Activated T-helper 1 cell treated with anti-CD3 and anti-CD28 coated beads, Interleukin-12 subunit alpha, Interleukin-12 subunit beta, Interleukin-2, Interleukin-4 antibody, amounts not matched to agents 30 ng/mL and 10 ng/mL and 1 ng/mL, durations not matched to agents 14 hours and 24 hours and 36 hours (primary cell): ENCODE measurements at regions of chr2 and their contacts with region 1.

Region 1: DNA sequence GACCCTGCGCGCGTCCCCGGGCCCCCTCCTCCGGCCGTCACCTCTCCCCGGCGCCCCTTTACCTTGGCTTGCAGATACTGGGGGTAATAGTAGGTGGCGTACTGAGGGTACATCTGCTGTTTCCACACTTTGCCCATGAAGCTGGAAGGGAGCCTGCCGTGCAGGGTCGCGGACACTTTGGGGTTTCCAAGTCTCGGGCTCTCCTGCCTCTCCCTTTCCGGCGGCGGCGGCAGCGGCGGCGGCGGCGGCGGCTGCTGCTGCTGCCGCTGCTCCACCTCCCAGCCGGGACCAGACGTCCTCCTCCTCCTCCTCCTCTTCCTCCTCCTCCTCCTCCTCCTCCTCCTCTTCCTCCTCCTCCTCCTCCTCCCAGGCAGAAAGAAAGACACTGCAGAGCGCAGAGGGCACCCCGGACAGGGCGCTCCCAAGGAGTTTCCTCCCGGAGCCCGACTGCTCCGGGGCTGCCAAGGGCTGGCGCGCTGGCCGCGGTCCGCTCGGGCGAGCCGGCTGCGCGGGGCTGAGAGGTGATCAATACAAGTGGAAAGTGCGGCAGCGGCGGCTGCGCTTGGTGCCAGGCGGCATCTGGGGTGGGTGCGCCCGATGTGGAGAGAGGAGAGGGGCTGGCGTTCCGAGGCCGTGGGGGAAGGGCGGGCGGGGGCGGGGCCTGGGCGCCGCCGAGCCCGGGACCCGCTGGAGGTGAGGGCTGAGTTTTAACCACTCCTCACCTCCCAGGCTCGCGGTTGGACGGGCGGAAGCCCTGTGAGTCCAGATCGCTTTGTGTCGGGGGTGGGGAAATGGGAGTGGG is at the start of gene RBMS1:
- DNase-seq: peak; percentile 35
- H3K4me3 Mint-ChIP-seq: peak within 1 kb of the TSS; percentile 97
- H3K27ac Mint-ChIP-seq: peak within 1 kb of the TSS; percentile 97
- H3K4me1 Mint-ChIP-seq: peaks cover 47% of the 10 kb centered on the region
- H3K27me3 Mint-ChIP-seq: peaks cover 9% of the 10 kb centered on the region
- total RNA-seq, gene RBMS1: 35.4 and 36.3 TPM in 2 replicates

Region 2: DNA sequence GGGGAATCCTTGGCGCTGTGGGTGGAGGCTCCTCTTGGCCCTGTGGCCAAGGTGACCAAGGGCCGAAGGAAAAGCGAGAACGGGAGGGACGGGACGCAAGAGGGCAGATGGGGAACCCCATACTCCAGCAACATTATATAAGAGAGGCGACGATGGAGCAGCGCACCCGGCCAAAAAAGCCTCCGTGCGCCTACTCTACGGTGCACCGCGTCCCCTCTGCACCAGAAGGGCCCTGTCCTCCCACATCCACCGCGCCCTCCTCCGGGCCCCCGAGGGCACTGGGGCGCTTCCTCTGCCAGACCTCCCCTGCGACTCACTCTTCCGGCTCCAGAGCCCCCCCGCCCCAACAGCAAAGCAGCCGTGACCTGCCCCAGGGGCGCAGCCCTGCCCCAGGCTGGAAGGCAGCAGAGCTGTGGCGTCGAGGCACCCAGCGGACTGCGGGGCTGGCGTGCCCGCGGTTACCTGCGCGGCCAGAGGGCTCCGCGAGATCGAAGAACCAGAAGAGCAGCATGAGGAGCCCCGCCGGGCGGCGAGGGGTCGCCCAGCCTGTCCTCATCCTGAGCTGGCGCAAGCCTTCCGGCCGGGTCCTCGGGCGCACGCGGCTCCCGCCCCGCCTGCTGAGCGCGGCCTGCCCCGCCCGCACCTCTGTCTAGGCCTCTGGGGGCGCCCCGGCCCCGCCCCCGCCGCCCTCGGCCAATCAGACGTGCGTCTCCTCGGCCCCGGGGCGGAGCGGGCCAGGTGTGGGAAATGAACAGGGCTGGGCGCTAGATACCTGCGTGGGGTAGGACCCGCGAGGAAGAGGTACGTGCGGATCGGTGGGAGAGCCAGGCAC is 589.1 kb before region 1 on chr2:
- intact Hi-C with region 1: loop called (anchors 10 kb)
- DNase-seq: peak; percentile 69
- H3K4me3 Mint-ChIP-seq: peak within 1 kb of the TSS; percentile 92
- H3K27ac Mint-ChIP-seq: peak within 1 kb of the TSS; percentile 91
- H3K4me1 Mint-ChIP-seq: peaks cover 41% of the 10 kb centered on the region
- H3K27me3 Mint-ChIP-seq: no peaks in the 10 kb centered on the region

Region 3: GRCh38 chr2:160406591-160407392 is 86.6 kb before region 1 on chr2:
- intact Hi-C with region 1: loop called (anchors 1 kb)
- DNase-seq: peak; percentile 66
- H3K4me3 Mint-ChIP-seq: peak overlapping the region; percentile 90
- H3K27ac Mint-ChIP-seq: peak overlapping the region; percentile 92
- H3K4me1 Mint-ChIP-seq: peaks cover 83% of the 10 kb centered on the region
- H3K27me3 Mint-ChIP-seq: no peaks in the 10 kb centered on the region

Region 4: DNA sequence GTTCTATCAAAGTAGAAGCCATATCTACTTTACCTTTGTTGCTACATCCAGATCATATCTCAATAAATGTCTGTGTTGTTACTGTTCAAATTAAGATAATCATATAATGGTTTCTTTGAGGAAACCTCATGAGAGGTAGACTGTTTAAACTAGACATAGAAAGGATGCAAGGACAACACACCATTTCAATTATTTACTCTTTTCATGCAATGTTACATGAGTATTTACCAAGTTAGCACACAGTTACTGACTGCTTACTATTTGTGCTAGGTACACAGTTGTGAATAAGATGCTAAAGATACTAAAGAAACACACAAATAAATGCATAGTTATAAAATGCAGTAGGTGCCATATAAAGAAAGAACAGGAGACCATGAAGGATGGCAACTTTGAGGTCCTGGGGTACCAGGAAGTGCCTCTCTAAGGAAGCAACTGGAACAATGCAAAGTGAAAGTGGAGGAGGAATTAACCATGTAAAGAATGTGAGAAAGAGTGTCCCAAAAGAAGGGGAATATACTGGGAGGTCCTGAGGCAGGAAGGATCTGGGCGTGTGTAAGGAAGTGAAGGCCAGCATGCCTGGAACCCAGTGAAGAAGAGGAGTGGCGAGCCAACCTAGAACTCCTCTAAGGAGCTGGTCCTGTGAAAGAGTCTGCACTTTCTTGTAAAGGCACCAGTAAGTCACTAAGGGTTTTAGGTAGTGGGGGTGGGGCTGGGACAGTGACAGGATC is 39.2 kb before region 1 on chr2:
- intact Hi-C with region 1: no loop called
- DNase-seq: no peak
- H3K4me3 Mint-ChIP-seq: no peak overlapping the region
- H3K27ac Mint-ChIP-seq: no peak overlapping the region
- H3K4me1 Mint-ChIP-seq: peaks cover 6% of the 10 kb centered on the region
- H3K27me3 Mint-ChIP-seq: no peaks in the 10 kb centered on the region

Region 5: GRCh38 chr2:160472839-160473251 is 20.6 kb before region 1 on chr2:
- intact Hi-C with region 1: loop called (anchors 1 kb)
- DNase-seq: no peak
- H3K4me3 Mint-ChIP-seq: peak overlapping the region; percentile 49
- H3K27ac Mint-ChIP-seq: peak overlapping the region; percentile 59
- H3K4me1 Mint-ChIP-seq: peaks cover 67% of the 10 kb centered on the region
- H3K27me3 Mint-ChIP-seq: no peaks in the 10 kb centered on the region

Region 6: GRCh38 chr2:160505256-160505655 is 11.8 kb after region 1 on chr2:
- intact Hi-C with region 1: loop called (anchors 1 kb)
- DNase-seq: no peak
- H3K4me3 Mint-ChIP-seq: no peak overlapping the region
- H3K27ac Mint-ChIP-seq: no peak overlapping the region
- H3K4me1 Mint-ChIP-seq: peaks cover 29% of the 10 kb centered on the region
- H3K27me3 Mint-ChIP-seq: peaks cover 3% of the 10 kb centered on the region

Region 7: GRCh38 chr2:160652236-160652635 is 158.8 kb after region 1 on chr2:
- intact Hi-C with region 1: loop called (anchors 5 kb)
- DNase-seq: peak; percentile 48
- H3K4me3 Mint-ChIP-seq: peak overlapping the region; percentile 4
- H3K27ac Mint-ChIP-seq: peak overlapping the region; percentile 27
- H3K4me1 Mint-ChIP-seq: peaks cover 20% of the 10 kb centered on the region
- H3K27me3 Mint-ChIP-seq: peaks cover 4% of the 10 kb centered on the region

Region 8: DNA sequence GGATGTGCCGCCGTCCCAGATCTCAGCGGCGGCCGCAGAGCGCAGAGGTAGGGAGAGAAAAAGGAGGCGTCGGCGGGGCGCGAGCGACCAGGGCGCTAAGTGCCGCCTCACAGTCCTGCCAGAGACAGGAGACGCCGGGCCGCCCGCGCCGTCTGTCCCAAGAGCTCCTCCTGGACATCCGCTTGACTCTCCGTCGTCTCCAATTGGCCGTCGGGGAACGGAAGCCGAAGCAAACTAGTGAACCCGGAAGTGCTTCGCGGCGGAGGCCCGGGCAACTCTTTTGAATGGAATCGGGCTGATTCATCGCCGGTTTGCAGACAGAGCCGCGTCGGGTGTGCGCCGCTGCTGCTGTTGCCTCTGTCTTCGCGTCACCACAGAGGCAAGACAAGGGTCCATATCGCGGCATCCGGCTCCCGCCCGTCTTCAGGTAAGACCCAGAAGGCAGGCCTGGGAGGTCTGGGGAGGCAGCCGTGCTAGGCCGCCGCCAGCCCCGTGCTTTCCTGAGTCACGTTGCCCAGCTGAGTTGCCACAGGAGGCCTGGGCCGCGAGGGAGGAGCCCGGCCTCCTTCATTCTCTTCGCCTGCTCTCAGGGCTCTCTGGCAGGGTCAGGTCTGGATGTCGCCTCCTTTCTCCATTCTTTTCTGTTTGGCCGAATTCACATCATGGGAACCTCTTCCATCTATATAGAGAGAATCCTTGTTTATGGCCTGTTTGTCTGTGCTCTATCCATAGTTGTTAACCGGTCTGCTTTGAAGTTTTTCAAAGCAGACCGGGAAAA is 814.9 kb after region 1 on chr2 and contains the start of gene PSMD14:
- intact Hi-C with region 1: loop called (anchors 10 kb)
- DNase-seq: peak; percentile 90
- H3K4me3 Mint-ChIP-seq: peak within 1 kb of the TSS; percentile 91
- H3K27ac Mint-ChIP-seq: peak within 1 kb of the TSS; percentile 94
- H3K4me1 Mint-ChIP-seq: peaks cover 33% of the 10 kb centered on the region
- H3K27me3 Mint-ChIP-seq: peaks cover 5% of the 10 kb centered on the region
- total RNA-seq, gene PSMD14: 103 and 113 TPM in 2 replicates